ENCODE measurements at regions of chr2 and their contacts with region 1.

Region 1: DNA sequence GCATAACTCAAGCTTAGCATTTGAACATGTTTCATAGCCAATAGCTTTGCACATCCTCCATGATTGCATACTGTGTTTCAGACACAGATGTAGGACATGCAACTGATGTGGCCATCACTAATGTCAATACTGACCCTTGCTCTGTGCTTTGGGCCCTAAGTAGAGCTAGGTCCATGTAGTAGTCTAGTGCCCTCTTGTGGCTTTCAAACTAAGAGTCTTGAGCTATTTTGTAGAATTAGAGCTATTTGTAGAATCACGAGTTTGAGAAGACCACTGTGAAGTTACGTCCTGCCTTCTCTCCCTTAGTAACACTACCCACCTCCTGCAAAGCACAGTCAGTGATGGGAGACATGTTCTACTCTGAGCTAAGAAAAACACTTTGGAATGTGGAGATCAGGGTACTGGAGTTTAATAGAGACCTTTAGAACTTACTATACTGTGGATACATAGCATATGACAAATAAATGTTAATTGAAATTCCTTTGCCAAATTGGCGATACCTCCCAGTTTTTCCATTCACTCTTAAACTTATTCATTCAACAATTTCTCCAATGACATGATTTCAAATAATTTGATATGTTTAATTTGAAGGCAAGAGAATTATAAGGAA is 306.5 kb upstream of the TNP1 start:
- DNase-seq: peak in 1 of 5 donors; percentile 22
- ATAC-seq: peak; percentile 55 to 81 (median 68)
- H3K4me3 ChIP-seq: no peak overlapping the region
- H3K27ac ChIP-seq: no peak overlapping the region
- H3K4me1 ChIP-seq: peaks cover 0 to 24% (median 6%) of the 10 kb centered on the region in 12 donors
- H3K27me3 ChIP-seq: peaks cover 0 to 52% (median 0%) of the 10 kb centered on the region in 9 donors
- CTCF ChIP-seq: peak; percentile 51 to 82 (median 64)
- POLR2A ChIP-seq: no peak

Region 2: DNA sequence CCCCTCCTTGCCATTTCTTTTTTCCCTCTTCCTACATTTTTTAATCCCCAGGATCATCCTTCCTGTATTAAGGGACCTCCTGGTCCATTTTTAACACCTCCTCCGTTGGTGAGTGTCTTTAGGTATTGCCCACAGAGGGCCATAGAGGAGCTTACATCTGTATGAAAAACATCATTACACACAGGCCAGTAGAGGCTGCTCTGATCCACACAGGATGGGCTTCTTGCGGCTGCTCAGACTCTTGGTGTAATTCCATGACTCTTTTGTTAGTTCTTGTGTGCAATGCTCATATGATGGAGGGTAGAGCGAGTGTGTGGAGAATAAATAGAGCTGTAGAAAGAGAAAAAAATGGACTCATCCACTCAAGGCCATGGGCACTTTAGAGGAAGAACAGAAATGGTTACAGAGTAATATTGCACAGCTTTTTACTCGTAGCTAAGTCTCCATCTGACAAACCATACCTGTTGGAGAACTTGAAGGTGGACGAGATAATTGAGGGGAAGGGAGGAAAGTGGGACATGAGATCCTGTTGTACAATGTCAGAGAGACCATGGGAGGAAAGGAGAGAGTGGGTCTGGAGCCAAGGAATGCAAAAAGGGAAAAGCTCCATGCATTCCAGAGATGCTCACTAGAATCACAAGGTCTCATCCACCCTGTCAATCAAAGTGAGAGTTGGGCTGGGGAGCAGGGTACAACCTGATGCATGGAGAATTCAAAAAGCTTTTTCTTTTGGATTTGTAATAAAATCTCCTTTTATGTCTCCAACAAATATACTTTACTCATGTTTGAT is 176.8 kb before region 1 on chr2:
- intact Hi-C with region 1: loop called in 1 of 10 experiments (anchors 10 kb)
- DNase-seq: no peak
- ATAC-seq: peak in 1 of 4 donors; percentile 43
- H3K4me3 ChIP-seq: no peak overlapping the region
- H3K27ac ChIP-seq: no peak overlapping the region
- H3K4me1 ChIP-seq: peaks cover 0 to 29% (median 8%) of the 10 kb centered on the region in 12 donors
- H3K27me3 ChIP-seq: no peaks in the 10 kb centered on the region
- CTCF ChIP-seq: peak in 6 of 12 donors; percentile 4 to 28 (median 22)
- POLR2A ChIP-seq: no peak

Region 3: GRCh38 chr2:217331523-217332139 is 165.3 kb after region 1 on chr2:
- intact Hi-C with region 1: no loop called
- DNase-seq: peak in 2 of 5 donors; percentile 14 to 25
- ATAC-seq: peak; percentile 83 to 92 (median 88)
- H3K4me3 ChIP-seq: no peak overlapping the region
- H3K27ac ChIP-seq: peak overlapping the region in 10 of 12 donors; percentile 51 to 88 (median 75)
- H3K4me1 ChIP-seq: peaks cover 0 to 36% (median 13%) of the 10 kb centered on the region in 12 donors
- H3K27me3 ChIP-seq: peaks cover 0 to 4% (median 0%) of the 10 kb centered on the region in 9 donors
- CTCF ChIP-seq: no peak
- POLR2A ChIP-seq: no peak

Region 4: DNA sequence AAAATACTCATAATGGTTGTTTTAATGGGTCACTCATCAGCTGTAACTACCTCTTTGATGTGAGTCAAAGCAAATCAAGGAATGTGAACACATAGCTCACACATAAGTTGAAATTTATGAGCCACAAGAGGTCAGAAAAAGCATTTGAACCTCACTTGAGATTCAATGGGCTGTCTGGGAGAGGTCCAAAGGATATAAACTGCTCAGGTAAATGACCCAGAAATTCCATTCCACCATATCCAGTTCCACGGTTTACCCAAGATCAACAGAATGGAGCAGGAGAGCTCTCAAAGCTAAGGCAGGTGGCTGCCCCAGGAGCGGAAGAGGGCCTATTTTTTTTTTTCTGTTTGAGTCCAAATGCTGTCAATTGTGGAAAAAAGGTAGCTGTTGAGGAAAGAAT is 372.4 kb after region 1 on chr2:
- intact Hi-C with region 1: no loop called
- DNase-seq: no peak
- ATAC-seq: no peak
- H3K4me3 ChIP-seq: no peak overlapping the region
- H3K27ac ChIP-seq: no peak overlapping the region
- H3K4me1 ChIP-seq: peaks cover 0 to 17% (median 0%) of the 10 kb centered on the region in 12 donors
- H3K27me3 ChIP-seq: no peaks in the 10 kb centered on the region
- CTCF ChIP-seq: no peak
- POLR2A ChIP-seq: no peak

Measured in heart left ventricle (tissue), 16 donors.